ENCODE measurements at regions of chr1 and their contacts with region 1.

Region 1: DNA sequence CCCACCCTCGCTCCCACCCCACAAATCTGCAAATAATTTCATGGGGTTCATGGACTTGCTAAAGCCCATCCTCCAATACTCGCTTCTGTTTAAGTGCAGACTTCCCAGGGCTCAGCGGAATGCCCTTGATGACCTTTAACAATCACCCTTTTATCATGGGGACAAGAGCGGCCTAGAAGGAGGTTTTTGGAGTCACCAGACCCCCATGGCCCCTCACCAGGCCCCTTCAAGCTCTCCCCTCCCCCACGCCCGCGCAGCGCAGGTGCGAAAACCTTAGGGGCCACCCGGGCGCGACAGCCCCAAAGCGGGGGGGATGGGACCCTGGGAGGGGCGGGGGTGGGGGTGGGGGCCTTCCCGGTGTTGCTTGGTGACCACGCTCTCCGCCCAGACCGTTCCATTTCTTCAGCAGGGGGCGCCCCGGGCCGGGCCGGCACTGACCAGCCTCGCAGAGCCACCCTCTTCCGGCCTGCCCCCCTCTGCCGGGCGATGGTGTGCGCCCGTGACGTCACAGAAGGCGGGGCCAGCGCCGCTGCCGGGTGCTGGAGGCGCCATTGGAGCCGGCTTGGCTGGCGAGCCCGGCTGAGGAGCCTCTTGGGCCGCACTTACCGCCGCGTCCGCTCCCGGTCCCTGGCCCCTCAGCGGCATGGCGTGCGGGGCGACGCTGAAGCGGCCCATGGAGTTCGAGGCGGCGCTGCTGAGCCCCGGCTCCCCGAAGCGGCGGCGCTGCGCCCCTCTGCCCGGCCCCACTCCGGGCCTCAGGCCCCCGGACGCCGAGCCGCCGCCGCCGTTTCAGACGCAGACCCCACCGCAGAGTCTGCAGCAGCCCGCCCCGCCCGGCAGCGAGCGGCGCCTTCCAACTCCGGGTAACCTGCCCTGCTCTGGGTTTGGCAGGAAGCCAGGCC is at the start of gene AKIRIN1:
- DNase-seq: peak; percentile 95
- H3K4me3 Mint-ChIP-seq: peak within 1 kb of the TSS; percentile 84
- H3K27ac Mint-ChIP-seq: peak within 1 kb of the TSS; percentile 80
- H3K4me1 Mint-ChIP-seq: peaks cover 32% of the 10 kb centered on the region
- H3K27me3 Mint-ChIP-seq: no peaks in the 10 kb centered on the region
- total RNA-seq, gene AKIRIN1: 68.6 and 69.7 TPM in 2 replicates

Region 2: DNA sequence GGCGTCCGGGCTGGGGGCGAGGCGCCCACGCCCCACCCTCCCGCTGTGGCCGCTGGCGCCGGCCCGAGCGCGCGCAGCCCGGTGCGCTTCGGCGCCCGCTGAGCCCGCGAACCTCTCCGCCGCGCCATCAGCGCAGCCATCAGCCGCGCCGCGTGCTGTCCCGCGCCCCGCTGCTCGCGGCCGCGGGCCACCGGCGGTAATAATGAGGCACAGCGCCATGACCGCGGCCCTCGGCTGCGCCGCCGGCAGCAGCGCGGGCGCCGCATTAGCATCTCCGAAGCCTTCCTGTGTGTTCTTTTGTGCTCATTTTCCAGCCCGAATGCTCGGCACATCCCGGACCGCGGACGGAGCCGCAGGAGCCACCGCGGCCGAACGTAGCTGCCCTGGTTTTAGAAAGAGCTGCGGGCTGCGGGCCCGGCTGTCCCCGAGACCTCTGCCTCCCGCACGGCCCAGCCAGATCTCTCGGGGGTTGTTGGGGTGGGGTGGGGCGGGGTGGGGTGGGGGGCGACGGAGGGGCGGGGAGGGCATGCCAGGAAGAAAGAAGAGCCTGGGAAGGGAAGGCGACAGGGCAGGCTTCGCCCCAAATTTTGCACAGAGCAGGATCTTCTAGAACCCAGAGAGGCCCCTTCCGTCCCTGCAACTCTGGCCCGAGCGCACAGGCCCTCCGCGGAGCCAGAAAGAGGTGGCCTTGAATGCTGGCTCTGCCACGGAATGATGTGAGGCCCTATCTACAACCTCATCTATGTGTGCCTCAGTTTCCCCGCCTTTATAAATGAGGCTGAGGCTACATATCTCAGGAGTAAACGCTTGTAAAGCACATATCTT is 186.7 kb before region 1 on chr1:
- intact Hi-C with region 1: no loop called
- DNase-seq: no peak
- H3K4me3 Mint-ChIP-seq: peak overlapping the region; percentile 32
- H3K27ac Mint-ChIP-seq: no peak overlapping the region
- H3K4me1 Mint-ChIP-seq: peaks cover 5% of the 10 kb centered on the region
- H3K27me3 Mint-ChIP-seq: peaks cover 63% of the 10 kb centered on the region

Region 3: DNA sequence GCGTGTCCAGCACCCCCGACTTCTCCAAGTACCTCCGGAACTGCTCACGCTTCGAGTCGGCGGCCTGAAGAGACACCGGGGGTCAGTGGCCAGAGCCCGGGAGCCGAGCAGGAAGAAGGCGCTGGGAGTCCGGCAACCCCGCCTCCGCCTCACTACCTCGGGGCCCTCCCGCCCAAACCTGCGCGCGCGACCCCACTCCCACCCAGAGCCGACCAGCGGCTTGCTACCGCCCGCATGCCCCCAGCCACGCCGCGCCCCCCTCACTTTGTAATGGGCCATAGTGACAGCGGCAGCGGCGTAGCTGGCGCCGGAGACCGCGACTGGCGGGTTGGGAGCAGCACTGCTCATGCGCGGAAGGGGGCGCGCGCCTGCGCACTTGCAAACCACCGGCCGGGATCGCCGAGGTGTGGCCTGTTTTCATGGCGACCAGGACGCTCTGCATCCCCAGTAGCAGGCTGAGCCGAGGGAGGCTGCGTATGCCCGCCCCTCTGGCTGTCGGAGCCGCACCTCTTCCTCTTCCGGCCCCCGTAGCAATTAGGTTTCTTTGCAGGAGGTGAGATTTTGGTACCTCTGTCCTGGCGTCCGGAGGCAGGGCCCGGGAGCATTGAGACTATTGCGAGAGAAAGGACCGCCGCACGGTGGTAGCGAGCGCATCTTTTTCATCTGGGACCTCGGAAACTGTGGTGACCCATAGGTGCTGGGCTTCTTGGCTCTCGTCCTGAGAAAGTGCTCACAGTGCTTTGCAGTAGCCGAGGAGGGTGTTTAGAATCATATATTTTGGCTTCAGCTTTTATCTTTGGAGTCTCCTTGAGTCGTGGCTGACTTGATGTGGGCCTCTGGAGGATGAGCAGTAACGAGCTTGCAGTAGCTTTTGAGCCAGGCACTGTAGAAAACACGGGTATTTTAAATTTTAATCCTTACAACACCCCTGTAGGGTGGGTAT is 117.7 kb before region 1 on chr1 and contains the start of gene MYCBP:
- intact Hi-C with region 1: loop called (anchors 5 kb)
- DNase-seq: peak; percentile 98
- H3K4me3 Mint-ChIP-seq: peak within 1 kb of the TSS; percentile 88
- H3K27ac Mint-ChIP-seq: peak within 1 kb of the TSS; percentile 75
- H3K4me1 Mint-ChIP-seq: peaks cover 29% of the 10 kb centered on the region
- H3K27me3 Mint-ChIP-seq: no peaks in the 10 kb centered on the region
- total RNA-seq, gene MYCBP: 31.7 and 34.9 TPM in 2 replicates

Region 4: DNA sequence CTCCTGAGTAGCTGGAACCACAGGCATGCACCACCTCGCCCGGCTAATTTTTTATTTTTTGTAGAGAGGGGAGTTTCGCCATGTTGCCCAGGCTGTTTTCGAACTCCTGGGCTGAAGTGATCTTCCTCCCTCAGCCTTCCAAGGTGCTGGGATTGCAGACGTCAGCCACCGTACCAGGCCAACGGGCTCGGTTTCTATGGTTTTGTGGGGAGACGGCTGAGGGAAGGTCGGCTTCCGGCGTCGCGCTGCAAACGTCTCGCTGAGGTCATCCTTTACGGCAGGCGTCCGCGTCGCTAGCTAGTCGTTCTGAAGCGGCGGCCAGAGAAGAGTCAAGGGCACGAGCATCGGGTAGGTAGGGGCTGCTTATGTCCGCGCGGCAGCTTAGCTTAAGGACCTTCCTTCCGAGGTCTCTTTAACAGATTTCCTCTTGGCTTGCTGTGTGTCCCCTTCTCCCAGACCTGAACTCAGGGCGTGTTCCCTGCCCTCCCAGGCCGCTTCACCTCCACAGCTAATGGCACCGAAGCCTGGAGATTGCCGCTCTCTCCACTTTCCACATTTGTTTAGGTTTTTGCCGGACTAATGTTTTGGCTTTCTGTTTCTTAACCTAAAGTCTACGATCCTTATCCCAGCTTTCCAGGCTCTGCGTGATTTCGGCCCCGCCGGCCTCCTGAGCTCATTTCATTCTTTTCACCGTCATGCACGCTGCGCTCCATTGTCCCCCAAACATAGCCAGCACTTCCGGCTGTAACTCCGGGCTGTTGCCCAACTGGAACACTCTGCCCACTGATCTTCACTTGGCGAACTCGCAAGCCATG is 35.3 kb after region 1 on chr1 and contains the start of gene NDUFS5:
- intact Hi-C with region 1: loop called (anchors 1 kb)
- DNase-seq: peak; percentile 79
- H3K4me3 Mint-ChIP-seq: peak within 1 kb of the TSS; percentile 100
- H3K27ac Mint-ChIP-seq: peak within 1 kb of the TSS; percentile 100
- H3K4me1 Mint-ChIP-seq: peaks cover 16% of the 10 kb centered on the region
- H3K27me3 Mint-ChIP-seq: no peaks in the 10 kb centered on the region
- total RNA-seq, gene NDUFS5: 173 and 188 TPM in 2 replicates

Measured in activated T-helper 2 cell treated with anti-CD3 and anti-CD28 coated beads, Interferon-gamma antibody, Interleukin-2, Interleukin-4, amounts not matched to agents 10 μg/mL and 5 μg/mL and 100 μg/mL, durations not matched to agents 14 hours and 24 hours and 36 hours (primary cell).